Activated naive CD4-positive, alpha-beta T cell treated with anti-CD3 and anti-CD28 coated beads for 36 hours (primary cell): ENCODE measurements at regions of chr10 and their contacts with region 1.

Region 1: GRCh38 chr10:47311932-47312662 is 10.2 kb upstream of the GDF2 start:
- DNase-seq: peak; percentile 93
- H3K4me3 Mint-ChIP-seq: no peak overlapping the region
- H3K27ac Mint-ChIP-seq: peak overlapping the region; percentile 41
- H3K4me1 Mint-ChIP-seq: peaks cover 32% of the 10 kb centered on the region
- H3K27me3 Mint-ChIP-seq: no peaks in the 10 kb centered on the region

Region 2: DNA sequence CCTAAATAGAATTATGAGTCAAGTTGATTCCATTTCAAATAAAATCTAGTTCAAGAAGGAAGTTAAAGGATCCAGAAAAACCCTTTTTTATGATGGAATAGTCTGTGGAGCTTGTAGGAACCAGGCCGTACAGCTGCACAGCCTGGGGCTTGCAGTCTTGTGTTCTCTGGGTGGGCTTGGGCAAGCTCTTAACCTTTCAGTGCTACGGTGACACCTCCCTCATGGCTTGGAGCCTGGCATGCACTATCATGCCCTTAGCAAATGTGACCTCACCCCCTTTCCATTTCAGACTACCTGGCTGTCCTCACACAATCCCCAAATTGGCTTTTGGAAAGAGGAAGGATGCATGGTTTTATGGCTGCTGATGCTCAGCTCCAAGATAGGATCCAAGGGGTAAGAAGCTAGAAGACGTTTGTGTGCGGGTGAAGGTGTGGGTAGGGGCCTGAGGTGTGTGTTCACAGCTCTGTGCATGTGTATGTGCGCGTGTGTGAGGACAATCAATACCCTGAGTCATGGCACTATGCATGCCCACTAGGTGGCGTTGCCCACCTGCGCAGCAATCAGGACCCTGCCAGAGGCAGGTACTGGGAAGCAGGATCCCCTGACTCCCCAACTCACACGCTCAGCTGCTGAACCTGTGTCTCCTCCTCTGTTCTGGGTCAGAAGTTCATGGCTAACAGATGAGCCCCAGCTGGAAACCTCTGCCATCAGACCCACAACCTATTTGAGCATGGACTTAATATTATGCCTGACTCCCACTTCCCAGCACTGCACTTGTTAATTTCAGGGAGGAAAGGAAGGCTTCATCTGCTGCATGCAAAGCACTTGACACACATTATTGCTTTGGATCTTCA is 287.5 kb before region 1 on chr10:
- CTCF ChIA-PET with region 1: interaction called, 72 read pairs
- intact Hi-C with region 1: loop called (anchors 1 kb)
- DNase-seq: peak; percentile 84
- H3K4me3 Mint-ChIP-seq: no peak overlapping the region
- H3K27ac Mint-ChIP-seq: no peak overlapping the region
- H3K4me1 Mint-ChIP-seq: no peaks in the 10 kb centered on the region
- H3K27me3 Mint-ChIP-seq: no peaks in the 10 kb centered on the region

Region 3: GRCh38 chr10:47165711-47166524 is 146.2 kb before region 1 on chr10:
- CTCF ChIA-PET with region 1: interaction called, 11 read pairs
- intact Hi-C with region 1: loop called (anchors 5 kb)
- DNase-seq: peak; percentile 62
- H3K4me3 Mint-ChIP-seq: peak overlapping the region; percentile 66
- H3K27ac Mint-ChIP-seq: peak overlapping the region; percentile 87
- H3K4me1 Mint-ChIP-seq: peaks cover 24% of the 10 kb centered on the region
- H3K27me3 Mint-ChIP-seq: no peaks in the 10 kb centered on the region

Region 4: GRCh38 chr10:47261121-47261520 is 51.0 kb before region 1 on chr10:
- CTCF ChIA-PET with region 1: interaction called, 11 read pairs
- intact Hi-C with region 1: loop called (anchors 1 kb)
- DNase-seq: peak; percentile 71
- H3K4me3 Mint-ChIP-seq: peak overlapping the region; percentile 41
- H3K27ac Mint-ChIP-seq: peak overlapping the region; percentile 98
- H3K4me1 Mint-ChIP-seq: peaks cover 94% of the 10 kb centered on the region
- H3K27me3 Mint-ChIP-seq: no peaks in the 10 kb centered on the region

Region 5: DNA sequence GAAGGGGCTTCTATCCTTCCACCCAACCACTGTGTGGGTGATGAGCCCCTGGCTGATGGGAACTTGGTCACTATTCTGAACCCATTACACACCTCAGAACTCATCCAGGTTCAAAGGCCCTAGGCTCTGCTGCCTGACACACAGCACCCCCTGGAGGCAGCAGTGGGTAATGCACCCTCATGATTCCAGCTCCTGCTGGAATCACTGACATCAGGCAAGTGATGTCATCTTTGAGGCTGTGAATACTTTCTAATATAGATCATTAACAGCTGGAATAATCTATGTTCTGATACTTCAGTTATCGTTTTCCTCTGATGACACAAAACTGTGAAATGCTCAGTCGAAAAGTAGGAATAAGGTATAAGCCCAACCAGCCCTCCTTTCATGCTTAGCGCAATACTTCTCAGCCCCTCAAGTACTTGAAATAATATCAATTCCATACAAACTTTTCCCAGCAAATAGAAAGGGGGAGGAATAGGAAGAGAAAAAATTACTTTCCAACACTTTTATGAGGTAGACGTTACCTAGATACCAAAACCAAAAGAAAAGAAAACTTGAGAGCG is 28.6 kb after region 1 on chr10:
- CTCF ChIA-PET with region 1: interaction called, 4 read pairs
- intact Hi-C with region 1: loop called (anchors 1 kb)
- DNase-seq: peak; percentile 78
- H3K4me3 Mint-ChIP-seq: no peak overlapping the region
- H3K27ac Mint-ChIP-seq: no peak overlapping the region
- H3K4me1 Mint-ChIP-seq: no peaks in the 10 kb centered on the region
- H3K27me3 Mint-ChIP-seq: peaks cover 4% of the 10 kb centered on the region

Region 6: GRCh38 chr10:47421057-47421952 is 109.2 kb after region 1 on chr10:
- CTCF ChIA-PET with region 1: no interaction called
- intact Hi-C with region 1: no loop called
- DNase-seq: no peak
- H3K4me3 Mint-ChIP-seq: no peak overlapping the region
- H3K27ac Mint-ChIP-seq: no peak overlapping the region
- H3K4me1 Mint-ChIP-seq: no peaks in the 10 kb centered on the region
- H3K27me3 Mint-ChIP-seq: no peaks in the 10 kb centered on the region